GM10248 (cell line): ENCODE measurements at regions of chr2 and their contacts with region 1.

Region 1: DNA sequence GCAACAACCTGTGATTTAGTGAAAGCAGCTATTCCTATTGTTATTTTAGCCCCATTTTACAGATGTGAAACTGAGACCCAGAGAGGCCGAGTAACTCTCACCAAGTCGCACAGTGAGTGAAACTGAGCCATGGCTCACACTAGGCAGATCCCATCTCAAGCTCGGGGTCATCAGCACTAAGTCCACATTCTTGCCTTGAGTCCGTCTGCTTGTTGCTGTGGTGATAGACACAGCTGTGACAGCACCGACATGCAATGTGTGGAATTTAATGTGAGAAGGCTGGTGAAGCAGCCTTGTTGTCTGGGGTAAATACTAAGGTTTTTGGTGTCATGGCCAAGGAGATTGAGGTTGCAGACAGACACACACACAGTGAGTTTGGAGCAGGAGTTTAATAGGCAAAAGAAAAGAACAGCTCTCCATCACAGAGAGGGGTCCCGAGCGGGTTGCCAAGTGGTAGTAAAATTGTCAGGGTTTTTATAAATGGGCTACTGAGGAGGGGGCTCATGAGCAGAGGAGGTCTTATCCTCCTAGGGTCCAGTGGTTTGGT is 40.2 kb upstream of the GMCL1 start:
- DNase-seq: no peak
- CTCF ChIP-seq: no peak

Region 2: GRCh38 chr2:69704446-69704845 is 84.8 kb before region 1 on chr2:
- CTCF ChIA-PET with region 1: no interaction called
- POLR2A ChIA-PET with region 1: no interaction called
- DNase-seq: no peak
- CTCF ChIP-seq: no peak

Region 3: DNA sequence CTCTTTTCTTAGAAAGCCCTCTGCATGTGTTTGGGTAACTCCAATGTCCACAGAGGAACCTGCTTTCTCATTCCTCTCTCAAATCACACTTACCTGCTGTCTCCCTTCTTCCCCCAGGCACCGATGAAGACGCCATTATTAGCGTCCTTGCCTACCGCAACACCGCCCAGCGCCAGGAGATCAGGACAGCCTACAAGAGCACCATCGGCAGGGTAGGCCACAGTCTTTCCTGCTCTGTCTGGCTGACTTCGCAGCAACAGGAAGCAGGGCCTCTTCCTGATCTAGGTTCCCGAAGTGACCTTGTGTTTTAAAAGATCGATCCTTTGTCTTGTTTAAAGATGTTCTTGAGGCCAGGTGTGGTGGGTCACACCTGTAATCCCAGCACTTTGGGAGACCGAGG is 15.2 kb after region 1 on chr2:
- CTCF ChIA-PET with region 1: interaction called, 26 read pairs
- POLR2A ChIA-PET with region 1: no interaction called
- DNase-seq: no peak
- CTCF ChIP-seq: no peak

Region 4: DNA sequence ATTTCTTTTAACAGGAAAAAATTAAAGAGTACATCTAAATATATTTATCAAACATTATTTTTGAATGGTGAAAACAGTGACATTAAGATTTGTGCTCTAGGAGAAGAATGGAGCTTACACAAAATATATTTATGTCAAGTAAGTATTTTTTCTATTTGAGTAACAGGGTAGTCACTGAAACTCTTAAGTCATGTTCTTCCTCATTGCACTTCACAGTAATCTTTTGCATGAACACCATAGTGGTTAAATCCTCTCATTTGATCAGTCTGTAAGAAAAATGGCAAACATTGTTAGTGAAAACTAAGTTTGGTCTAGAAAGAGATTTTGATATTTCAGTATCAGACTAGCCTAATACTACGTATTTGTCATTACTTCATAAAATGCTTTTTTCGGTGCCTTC is 48.3 kb after region 1 on chr2:
- CTCF ChIA-PET with region 1: no interaction called
- POLR2A ChIA-PET with region 1: no interaction called
- DNase-seq: peak; percentile 16
- CTCF ChIP-seq: no peak